ENCODE measurements at regions of chr15 and their contacts with region 1.

Region 1: DNA sequence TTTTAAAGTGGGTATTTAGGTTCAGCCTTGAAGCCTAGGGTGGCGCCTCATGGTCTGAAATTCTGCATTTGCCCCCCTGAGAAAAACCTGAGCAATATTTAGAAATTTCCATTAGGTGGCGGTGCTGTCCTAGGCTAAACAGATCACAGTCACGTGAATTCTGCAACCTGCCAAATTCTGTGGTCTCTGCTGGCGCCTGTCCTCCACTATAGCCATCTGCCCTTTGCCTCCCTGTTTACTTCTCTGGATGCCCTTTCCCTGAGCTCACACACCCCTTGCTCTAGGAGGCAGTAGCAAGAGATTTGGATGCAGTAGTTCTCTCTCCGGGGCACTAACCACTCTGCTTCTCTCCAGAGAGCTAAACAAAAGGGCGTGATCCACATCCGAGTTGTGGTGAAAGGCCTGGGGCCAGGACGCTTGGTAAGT is 9.1 kb downstream of the MRPS11 start:
- DNase-seq: peak in 37 of 42 donors; percentile 18 to 82 (median 55)

Region 2: GRCh38 chr15:88610701-88611231 is 134.1 kb after region 1 on chr15:
- intact Hi-C with region 1: loop called (anchors 10 kb)
- DNase-seq: peak in 3 of 42 donors; percentile 16 to 26 (median 16)

Measured in head of caudate nucleus (tissue), 42 donors.